Aorta (tissue), 5 donors: ENCODE measurements at regions of chr1 and their contacts with region 1.

Region 1: DNA sequence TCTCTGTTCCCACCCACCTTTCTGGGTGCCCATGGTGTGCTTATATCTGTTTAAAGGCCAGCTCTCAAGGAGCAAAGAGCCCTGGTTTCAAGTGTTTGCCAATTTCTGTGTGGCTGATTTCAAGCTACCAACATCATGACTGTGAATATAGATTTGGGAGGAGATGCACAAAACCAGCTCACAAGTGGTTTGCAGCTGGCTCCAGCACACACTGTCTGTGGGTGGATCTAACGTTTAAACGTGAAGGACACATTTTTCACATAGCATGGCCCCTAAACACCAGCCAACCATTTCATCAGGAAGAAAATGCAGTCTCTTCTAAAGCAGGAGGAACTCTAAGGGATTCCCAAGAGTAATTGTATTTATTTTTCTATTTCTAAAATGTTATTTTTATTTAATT is 65.2 kb downstream of the FCRL5 start:
- DNase-seq: no peak
- ATAC-seq: no peak
- H3K4me3 ChIP-seq: no peak overlapping the region
- H3K27ac ChIP-seq: no peak overlapping the region
- H3K4me1 ChIP-seq: no peaks in the 10 kb centered on the region
- H3K27me3 ChIP-seq: no peaks in the 10 kb centered on the region

Region 2: GRCh38 chr1:157193702-157194391 is 293.2 kb before region 1 on chr1:
- intact Hi-C with region 1: loop called (anchors 5 to 10 kb)
- DNase-seq: peak; percentile 67 to 85
- ATAC-seq: no peak
- H3K4me3 ChIP-seq: no peak overlapping the region
- H3K27ac ChIP-seq: no peak overlapping the region
- H3K4me1 ChIP-seq: no peaks in the 10 kb centered on the region
- H3K27me3 ChIP-seq: peaks cover 0 to 2% of the 10 kb centered on the region in 2 donors

Region 3: GRCh38 chr1:157380523-157380922 is 106.6 kb before region 1 on chr1:
- intact Hi-C with region 1: loop called in 1 of 2 experiments (anchors 2 kb)
- DNase-seq: no peak
- ATAC-seq: peak; percentile 10
- H3K4me3 ChIP-seq: no peak overlapping the region
- H3K27ac ChIP-seq: no peak overlapping the region
- H3K4me1 ChIP-seq: no peaks in the 10 kb centered on the region
- H3K27me3 ChIP-seq: no peaks in the 10 kb centered on the region

Region 4: GRCh38 chr1:157532569-157532968 is 45.5 kb after region 1 on chr1:
- intact Hi-C with region 1: no loop called
- DNase-seq: no peak
- ATAC-seq: no peak
- H3K4me3 ChIP-seq: no peak overlapping the region
- H3K27ac ChIP-seq: no peak overlapping the region
- H3K4me1 ChIP-seq: no peaks in the 10 kb centered on the region
- H3K27me3 ChIP-seq: no peaks in the 10 kb centered on the region